ENCODE measurements at regions of chr6 and their contacts with region 1.

Region 1: DNA sequence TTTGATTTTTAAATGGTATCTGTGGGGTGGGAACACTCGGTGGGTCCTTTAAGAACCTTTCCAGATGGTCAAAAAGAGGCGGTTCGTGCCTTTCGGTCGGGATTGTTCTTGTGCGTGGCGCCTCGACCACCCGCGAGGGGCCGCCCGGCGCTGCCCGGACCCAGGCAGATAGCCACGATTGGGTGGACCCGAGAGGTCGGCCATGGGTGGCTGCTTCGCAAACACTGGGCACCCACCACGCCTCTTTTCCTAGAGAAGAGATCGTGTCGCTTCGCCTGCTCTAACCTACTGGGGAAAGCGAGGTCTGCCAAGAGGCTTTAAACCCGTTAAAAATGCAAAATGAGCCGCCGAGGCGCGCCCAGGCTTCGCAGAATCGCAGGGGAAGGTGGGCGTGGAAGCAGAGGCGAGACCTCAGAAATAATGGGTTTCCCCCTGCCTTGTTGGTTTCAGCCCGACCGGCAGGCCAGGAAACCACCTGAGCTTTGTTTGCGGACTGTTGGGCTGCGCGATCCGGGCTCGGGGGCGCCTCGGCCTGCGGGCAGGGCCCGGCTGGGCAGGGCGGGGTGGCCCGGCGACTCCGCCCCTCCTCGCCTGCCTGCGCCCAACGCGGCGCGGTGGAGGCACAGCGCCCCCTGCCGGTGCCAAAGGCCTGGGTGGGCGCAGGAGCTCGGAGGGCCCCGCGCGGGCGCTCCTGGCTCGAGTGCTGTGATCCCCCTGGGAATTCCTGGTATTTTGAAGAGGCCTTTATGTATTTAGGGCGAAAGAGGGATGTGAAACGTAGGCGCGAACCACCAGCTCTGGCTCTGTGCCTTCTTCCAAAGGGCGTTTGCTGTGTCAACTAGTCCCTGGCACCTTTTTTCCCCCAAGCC is 1.6 kb downstream of the MARCKS start:
- DNase-seq: no peak
- H3K4me3 ChIP-seq: peak overlapping the region; percentile 99
- CTCF ChIP-seq: peak; percentile 84

Region 2: GRCh38 chr6:113375950-113376846 is 482.5 kb before region 1 on chr6:
- CTCF ChIA-PET with region 1: interaction called, 6 read pairs
- POLR2A ChIA-PET with region 1: interaction called, 12 read pairs
- DNase-seq: no peak
- H3K4me3 ChIP-seq: peak overlapping the region; percentile 29
- CTCF ChIP-seq: no peak

Region 3: DNA sequence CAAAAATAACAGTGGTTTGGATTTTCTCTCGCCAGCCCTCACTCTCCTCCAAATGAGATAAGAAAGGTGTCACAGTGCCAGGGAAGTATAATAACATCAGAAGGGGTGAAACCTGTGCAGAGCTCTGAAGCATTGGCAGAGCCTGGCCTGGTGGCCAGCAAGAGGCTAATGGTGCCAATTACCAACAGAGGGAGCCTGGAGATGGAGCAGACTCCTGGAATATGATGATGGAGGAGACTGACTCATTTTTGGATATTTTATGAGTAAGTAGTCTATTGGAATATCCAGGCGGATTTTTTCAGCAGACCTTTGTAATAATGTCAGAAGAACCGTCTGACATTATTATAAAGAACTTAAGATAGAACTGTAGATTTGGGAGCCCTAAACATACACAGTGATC is 444.2 kb before region 1 on chr6:
- CTCF ChIA-PET with region 1: interaction called, 15 read pairs
- POLR2A ChIA-PET with region 1: no interaction called
- DNase-seq: no peak
- H3K4me3 ChIP-seq: no peak overlapping the region
- CTCF ChIP-seq: peak; percentile 70

Region 4: GRCh38 chr6:113610377-113610988 is 248.2 kb before region 1 on chr6:
- CTCF ChIA-PET with region 1: no interaction called
- POLR2A ChIA-PET with region 1: no interaction called
- DNase-seq: no peak
- H3K4me3 ChIP-seq: no peak overlapping the region
- CTCF ChIP-seq: no peak

Region 5: DNA sequence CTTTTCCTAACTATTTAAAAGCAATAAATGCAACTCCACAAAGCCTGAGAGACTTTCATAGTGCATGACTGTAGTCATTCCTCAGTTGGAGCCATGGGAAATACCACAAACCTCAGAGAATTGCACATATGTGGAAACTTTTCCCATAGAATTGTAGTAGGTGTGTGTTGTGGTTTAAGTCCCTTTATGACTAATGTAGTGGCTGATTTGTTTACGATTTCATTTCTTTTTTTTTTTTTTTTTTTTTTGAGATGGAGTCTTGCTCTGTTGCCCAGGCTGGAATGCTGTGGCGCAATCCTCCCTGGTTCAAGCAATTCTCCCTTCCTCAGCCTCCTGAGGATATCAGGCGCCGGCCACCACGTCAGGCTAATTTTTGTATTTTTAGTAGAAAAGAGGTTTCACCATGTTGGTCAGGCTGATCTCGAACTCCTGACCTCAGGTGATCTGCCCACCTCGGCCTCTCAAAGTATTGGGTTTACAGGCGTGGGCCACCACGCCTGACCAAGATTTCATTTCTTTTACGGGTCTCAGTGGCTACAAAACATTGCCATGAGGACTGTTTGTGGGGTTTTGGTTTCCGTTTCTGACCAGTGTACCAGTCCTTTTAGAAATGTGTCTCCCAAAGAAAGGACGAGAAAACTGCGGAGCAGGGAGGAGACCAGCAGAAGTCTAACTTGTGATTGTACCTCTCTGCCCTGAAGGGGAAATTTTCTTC is 213.7 kb before region 1 on chr6:
- CTCF ChIA-PET with region 1: interaction called, 10 read pairs
- POLR2A ChIA-PET with region 1: interaction called, 19 read pairs
- DNase-seq: peak; percentile 99
- H3K4me3 ChIP-seq: no peak overlapping the region
- CTCF ChIP-seq: no peak

Region 6: DNA sequence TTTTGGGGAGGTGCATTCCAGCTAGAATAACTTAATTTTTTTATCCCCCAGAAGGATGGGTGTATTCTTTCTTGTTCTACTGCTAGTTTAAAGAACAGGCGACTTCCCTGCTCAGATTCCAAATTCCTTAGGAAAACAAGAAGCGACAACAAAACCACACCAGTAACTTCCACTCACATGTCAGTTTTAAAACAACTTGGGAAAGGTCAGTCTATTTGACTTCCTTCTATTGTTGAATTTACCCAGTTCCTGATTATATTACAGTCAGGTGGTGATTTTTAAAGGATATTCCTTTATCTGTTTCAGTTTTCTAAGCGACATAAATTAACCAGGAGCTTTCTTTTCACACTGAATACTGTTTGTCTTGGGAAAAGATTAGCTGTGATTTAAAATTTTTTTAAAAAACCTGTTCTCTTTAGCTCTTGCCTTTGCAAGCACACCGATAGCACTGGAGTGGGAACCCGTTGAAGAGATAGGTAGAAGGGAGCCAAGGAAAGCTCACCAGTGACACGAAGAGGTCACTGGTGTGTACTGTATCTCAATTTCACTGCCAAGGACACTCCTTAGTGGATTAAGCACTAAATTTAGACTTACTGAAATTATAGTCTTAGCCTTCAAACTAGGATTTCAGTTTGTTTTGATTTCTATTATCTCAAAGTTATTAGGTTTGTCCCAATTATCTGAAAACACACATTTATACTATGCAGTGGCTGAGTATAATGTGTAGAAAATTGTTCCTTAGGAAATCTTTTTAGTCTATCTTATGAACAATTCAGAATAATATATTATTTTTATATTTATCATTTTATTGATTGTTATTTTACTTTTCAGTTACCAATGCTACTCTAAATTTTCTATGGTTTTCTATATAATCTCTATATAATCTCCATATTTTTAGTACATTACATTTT is 20.7 kb after region 1 on chr6:
- CTCF ChIA-PET with region 1: interaction called, 13 read pairs
- POLR2A ChIA-PET with region 1: no interaction called
- DNase-seq: no peak
- H3K4me3 ChIP-seq: no peak overlapping the region
- CTCF ChIP-seq: peak; percentile 63

Region 7: GRCh38 chr6:114119056-114119455 is 260.3 kb after region 1 on chr6:
- CTCF ChIA-PET with region 1: no interaction called
- POLR2A ChIA-PET with region 1: no interaction called
- DNase-seq: no peak
- H3K4me3 ChIP-seq: no peak overlapping the region
- CTCF ChIP-seq: no peak

Measured in AG04449 (cell line).